ENCODE measurements at regions of chr10 and their contacts with region 1.

Region 1: GRCh38 chr10:6473901-6474370 is 106.1 kb downstream of the PRKCQ start:
- DNase-seq: peak; percentile 38
- H3K4me3 Mint-ChIP-seq: peak overlapping the region; percentile 86
- H3K27ac Mint-ChIP-seq: peak overlapping the region; percentile 96
- H3K4me1 Mint-ChIP-seq: peaks cover 66% of the 10 kb centered on the region
- H3K27me3 Mint-ChIP-seq: no peaks in the 10 kb centered on the region

Region 2: DNA sequence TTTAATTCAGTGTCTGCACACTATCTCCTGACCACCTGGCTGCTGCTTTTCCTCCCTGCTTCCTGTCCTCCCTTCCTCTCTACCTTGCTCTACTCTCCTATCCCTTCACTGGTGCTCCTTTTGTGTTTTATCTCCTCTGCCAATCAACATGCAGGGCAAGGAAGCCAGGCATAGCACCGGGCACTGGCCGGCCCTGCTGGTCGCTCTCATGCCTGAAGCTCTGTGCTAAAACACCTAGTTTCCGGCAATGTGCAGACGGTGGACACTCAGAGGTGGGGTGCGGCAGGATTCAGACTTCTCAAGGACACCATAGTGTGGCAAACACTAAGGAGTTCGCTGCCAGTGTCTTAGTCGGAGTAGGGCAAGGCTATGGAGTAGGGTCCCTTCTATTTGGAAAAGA is 71.0 kb before region 1 on chr10:
- CTCF ChIA-PET with region 1: no interaction called
- POLR2A ChIA-PET with region 1: no interaction called
- DNase-seq: no peak
- H3K4me3 Mint-ChIP-seq: no peak overlapping the region
- H3K27ac Mint-ChIP-seq: no peak overlapping the region
- H3K4me1 Mint-ChIP-seq: peaks cover 39% of the 10 kb centered on the region
- H3K27me3 Mint-ChIP-seq: peaks cover 13% of the 10 kb centered on the region

Region 3: GRCh38 chr10:6445501-6446316 is 28.2 kb before region 1 on chr10:
- CTCF ChIA-PET with region 1: interaction called, 11 read pairs
- POLR2A ChIA-PET with region 1: interaction called, 5 read pairs
- DNase-seq: peak; percentile 78
- H3K4me3 Mint-ChIP-seq: no peak overlapping the region
- H3K27ac Mint-ChIP-seq: peak overlapping the region; percentile 3
- H3K4me1 Mint-ChIP-seq: peaks cover 47% of the 10 kb centered on the region
- H3K27me3 Mint-ChIP-seq: no peaks in the 10 kb centered on the region

Region 4: GRCh38 chr10:6487920-6488319 is 14.0 kb after region 1 on chr10:
- CTCF ChIA-PET with region 1: interaction called, 17 read pairs
- POLR2A ChIA-PET with region 1: interaction called, 47 read pairs
- DNase-seq: no peak
- H3K4me3 Mint-ChIP-seq: no peak overlapping the region
- H3K27ac Mint-ChIP-seq: no peak overlapping the region
- H3K4me1 Mint-ChIP-seq: peaks cover 74% of the 10 kb centered on the region
- H3K27me3 Mint-ChIP-seq: no peaks in the 10 kb centered on the region

Region 5: GRCh38 chr10:6498771-6499170 is 24.8 kb after region 1 on chr10:
- CTCF ChIA-PET with region 1: interaction called, 17 read pairs
- POLR2A ChIA-PET with region 1: interaction called, 47 read pairs
- DNase-seq: peak; percentile 58
- H3K4me3 Mint-ChIP-seq: peak overlapping the region; percentile 55
- H3K27ac Mint-ChIP-seq: peak overlapping the region; percentile 91
- H3K4me1 Mint-ChIP-seq: peaks cover 32% of the 10 kb centered on the region
- H3K27me3 Mint-ChIP-seq: no peaks in the 10 kb centered on the region

Region 6: GRCh38 chr10:6563075-6563474 is 89.1 kb after region 1 on chr10:
- CTCF ChIA-PET with region 1: interaction called, 7 read pairs
- POLR2A ChIA-PET with region 1: interaction called, 12 read pairs
- DNase-seq: peak; percentile 70
- H3K4me3 Mint-ChIP-seq: peak overlapping the region; percentile 71
- H3K27ac Mint-ChIP-seq: peak overlapping the region; percentile 92
- H3K4me1 Mint-ChIP-seq: peaks cover 90% of the 10 kb centered on the region
- H3K27me3 Mint-ChIP-seq: no peaks in the 10 kb centered on the region

Region 7: GRCh38 chr10:6688661-6689435 is 214.9 kb after region 1 on chr10:
- CTCF ChIA-PET with region 1: no interaction called
- POLR2A ChIA-PET with region 1: no interaction called
- DNase-seq: no peak
- H3K4me3 Mint-ChIP-seq: no peak overlapping the region
- H3K27ac Mint-ChIP-seq: no peak overlapping the region
- H3K4me1 Mint-ChIP-seq: no peaks in the 10 kb centered on the region
- H3K27me3 Mint-ChIP-seq: peaks cover 19% of the 10 kb centered on the region

Region 8: GRCh38 chr10:7184660-7185366 is 710.9 kb after region 1 on chr10:
- CTCF ChIA-PET with region 1: no interaction called
- POLR2A ChIA-PET with region 1: no interaction called
- DNase-seq: no peak
- H3K4me3 Mint-ChIP-seq: no peak overlapping the region
- H3K27ac Mint-ChIP-seq: no peak overlapping the region
- H3K4me1 Mint-ChIP-seq: peaks cover 10% of the 10 kb centered on the region
- H3K27me3 Mint-ChIP-seq: no peaks in the 10 kb centered on the region